ENCODE measurements at regions of chr11 and their contacts with region 1.

Region 1: DNA sequence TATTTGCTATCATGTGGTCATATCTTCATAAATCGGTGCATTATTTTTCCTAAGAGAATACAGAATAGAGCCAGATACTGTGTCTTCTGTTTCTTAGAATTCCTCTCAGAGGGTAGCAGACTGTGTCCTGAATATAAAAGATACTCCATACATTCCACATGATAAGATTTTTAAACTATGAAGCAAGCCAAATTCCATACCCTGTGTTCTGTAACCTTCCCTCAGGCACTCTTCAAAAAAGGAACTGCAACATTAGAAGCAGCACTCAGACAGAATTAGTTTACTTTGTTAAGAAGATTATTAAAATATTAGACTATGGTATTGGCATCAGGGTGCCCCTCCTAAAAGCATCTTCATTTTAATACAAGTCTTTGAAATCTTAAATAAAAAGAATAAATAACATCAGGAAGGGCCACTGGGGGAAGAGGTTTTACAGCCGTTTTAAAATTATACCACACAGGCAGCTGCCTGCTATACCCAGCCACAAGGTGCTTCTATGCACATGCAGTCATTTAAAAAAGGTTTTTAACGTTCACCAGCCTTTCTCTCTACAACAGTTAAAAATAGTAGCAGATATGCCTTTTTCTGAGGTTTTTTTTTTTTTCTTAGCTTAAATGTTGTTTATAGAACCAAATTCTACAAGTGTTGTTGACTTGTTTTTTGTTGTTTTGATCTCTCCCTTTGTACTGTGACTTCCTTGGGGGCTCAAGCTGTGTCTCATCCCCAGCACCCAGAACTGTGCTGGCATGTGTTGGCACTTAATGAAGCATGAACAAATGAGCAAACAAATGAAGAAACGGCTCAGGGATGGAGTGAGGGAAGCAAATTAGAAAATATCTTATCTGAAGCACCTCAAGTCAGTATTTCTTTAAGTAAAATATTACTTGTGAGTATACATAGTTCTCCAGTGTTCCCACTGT is 54.7 kb upstream of the CCDC89 start:
- DNase-seq: no peak
- H3K4me3 Mint-ChIP-seq: no peak overlapping the region
- H3K27ac Mint-ChIP-seq: peak overlapping the region; percentile 1
- H3K4me1 Mint-ChIP-seq: peaks cover 43% of the 10 kb centered on the region
- H3K27me3 Mint-ChIP-seq: no peaks in the 10 kb centered on the region
- CTCF ChIP-seq: no peak

Region 2: DNA sequence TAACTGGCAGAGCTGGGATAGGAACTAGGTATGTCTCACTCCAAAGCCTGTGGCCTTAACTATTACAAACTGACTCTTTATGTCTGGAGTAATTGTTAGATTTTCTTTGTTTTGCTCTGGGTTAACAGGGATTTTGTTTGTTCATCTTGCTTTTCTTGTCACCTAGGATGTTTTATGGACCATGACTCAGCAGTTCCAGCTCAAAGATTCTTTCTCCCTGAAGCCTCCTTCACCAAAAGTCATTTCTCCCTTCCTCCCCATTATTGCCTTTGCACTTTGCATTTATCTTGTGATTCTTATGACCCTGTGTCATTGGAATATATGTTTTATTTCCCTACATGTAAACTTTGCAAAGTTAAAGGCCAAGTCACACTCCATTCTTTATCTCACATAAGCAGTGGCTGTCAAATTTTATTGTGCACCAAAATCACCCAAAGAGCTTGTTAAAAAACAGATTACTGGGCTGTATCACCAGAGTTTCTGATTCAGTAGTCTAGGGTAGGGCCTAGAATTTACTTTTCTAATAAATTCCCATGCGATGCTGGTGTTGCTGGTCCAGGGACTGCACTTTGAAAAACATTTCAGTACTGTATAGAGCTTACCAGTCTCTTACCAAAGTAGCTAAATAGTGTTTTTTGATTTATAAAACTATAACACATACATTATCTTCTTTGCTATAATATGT is 441.3 kb before region 1 on chr11:
- CTCF ChIA-PET with region 1: no interaction called
- intact Hi-C with region 1: no loop called
- DNase-seq: no peak
- H3K4me3 Mint-ChIP-seq: no peak overlapping the region
- H3K27ac Mint-ChIP-seq: no peak overlapping the region
- H3K4me1 Mint-ChIP-seq: no peaks in the 10 kb centered on the region
- H3K27me3 Mint-ChIP-seq: no peaks in the 10 kb centered on the region
- CTCF ChIP-seq: no peak

Region 3: DNA sequence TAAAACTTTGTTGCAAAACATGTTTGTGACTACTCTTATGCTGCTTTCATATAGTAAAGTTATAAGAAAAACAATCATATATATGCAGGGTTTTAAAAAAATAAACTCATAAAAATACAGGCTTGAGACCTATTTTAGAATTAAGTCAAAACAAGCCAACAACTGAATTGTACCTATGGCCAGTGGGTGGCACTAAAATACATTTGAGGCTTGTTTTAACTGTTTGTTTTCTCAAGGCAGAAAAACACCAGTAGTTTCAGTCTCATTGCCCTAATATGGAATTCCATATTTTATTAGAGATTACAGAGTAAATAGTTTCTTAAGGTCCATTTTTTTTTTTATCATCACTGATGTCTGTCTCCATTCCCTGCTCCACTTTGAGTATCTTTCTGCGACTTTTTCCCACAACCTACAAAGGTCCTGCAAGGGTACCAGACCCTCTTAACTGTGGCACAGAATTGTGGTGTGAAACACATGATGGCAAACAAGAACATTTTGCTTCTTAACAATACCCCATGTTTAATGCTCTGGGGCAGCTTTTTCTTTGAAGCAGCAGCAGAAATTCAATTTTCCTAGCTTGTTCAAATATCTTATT is 46.3 kb before region 1 on chr11:
- CTCF ChIA-PET with region 1: no interaction called
- intact Hi-C with region 1: loop called (anchors 10 kb)
- DNase-seq: peak; percentile 6
- H3K4me3 Mint-ChIP-seq: no peak overlapping the region
- H3K27ac Mint-ChIP-seq: no peak overlapping the region
- H3K4me1 Mint-ChIP-seq: peaks cover 18% of the 10 kb centered on the region
- H3K27me3 Mint-ChIP-seq: no peaks in the 10 kb centered on the region
- CTCF ChIP-seq: no peak

Region 4: DNA sequence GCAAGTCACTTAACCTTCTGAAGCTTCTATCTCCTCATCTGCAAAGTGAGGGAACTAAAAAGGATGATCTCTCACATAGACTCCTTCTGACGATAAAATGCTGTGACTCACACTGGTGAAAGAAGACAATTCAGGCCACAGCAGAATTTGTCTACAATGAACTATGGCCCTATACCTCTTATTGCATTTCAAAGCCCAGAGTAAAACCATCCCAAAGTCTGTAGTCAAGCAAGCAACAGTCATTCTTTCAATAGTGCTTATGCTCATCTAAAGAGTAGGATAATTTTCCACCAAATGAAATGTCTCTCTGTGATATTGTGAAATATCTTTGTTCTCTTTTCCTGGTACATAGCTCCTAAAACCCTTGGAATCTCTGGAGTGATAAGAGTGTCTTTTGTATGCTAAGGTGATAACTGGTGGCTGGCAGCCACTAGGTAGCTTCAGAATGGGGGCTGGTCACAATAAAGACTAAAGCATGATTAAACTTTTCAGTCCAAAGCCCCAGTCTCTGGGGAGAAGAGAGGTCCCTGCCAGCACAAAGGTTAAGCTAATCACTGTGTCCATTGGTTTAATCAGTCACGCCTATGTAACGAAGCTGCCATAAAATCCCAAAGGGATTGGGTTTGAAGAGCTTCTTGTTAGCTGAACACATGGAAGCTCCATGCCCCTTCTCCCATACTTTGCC is 39.4 kb after region 1 on chr11:
- CTCF ChIA-PET with region 1: no interaction called
- intact Hi-C with region 1: loop called (anchors 5 kb)
- DNase-seq: no peak
- H3K4me3 Mint-ChIP-seq: no peak overlapping the region
- H3K27ac Mint-ChIP-seq: no peak overlapping the region
- H3K4me1 Mint-ChIP-seq: peaks cover 35% of the 10 kb centered on the region
- H3K27me3 Mint-ChIP-seq: no peaks in the 10 kb centered on the region
- CTCF ChIP-seq: no peak

Region 5: DNA sequence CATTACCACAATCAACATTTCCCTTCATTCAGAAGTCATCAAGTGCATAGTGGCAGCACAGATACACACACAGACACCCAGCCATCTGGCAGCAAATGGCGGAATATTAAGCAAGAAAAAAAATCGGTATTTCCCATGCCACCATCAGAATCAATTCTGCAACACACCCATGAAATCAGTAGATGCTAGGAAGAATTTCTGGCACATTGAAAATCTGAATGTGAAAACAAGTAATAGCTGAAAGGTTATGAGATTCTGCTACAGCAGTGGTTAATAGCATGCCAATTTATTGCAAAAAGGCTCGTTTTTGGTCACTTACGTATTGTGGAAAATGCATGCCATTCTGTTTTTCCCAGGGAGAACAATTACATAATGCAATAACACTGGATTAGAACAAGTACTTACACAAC is 237.0 kb after region 1 on chr11:
- CTCF ChIA-PET with region 1: no interaction called
- intact Hi-C with region 1: no loop called
- DNase-seq: no peak
- H3K4me3 Mint-ChIP-seq: no peak overlapping the region
- H3K27ac Mint-ChIP-seq: no peak overlapping the region
- H3K4me1 Mint-ChIP-seq: no peaks in the 10 kb centered on the region
- H3K27me3 Mint-ChIP-seq: no peaks in the 10 kb centered on the region
- CTCF ChIP-seq: no peak

Region 6: DNA sequence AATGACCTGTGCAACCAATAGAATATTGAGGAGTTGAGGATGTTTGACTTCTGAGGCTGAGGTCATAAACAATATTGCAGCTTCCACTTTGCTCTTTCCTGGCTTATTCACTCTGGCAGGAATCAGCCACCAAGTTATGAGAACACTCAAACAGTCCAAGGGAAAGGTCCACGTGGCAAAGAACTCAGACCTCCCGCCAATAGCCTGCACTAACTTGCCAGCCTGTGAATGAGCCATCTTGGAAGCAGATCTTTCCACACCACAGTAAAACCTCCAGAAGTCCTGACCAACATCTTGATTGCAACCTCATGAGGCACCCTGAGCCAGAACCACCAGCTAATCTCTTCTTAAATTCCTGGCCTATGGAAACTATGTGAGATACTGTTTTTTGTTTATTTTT is 350.8 kb after region 1 on chr11:
- CTCF ChIA-PET with region 1: no interaction called
- intact Hi-C with region 1: no loop called
- DNase-seq: no peak
- H3K4me3 Mint-ChIP-seq: no peak overlapping the region
- H3K27ac Mint-ChIP-seq: no peak overlapping the region
- H3K4me1 Mint-ChIP-seq: no peaks in the 10 kb centered on the region
- H3K27me3 Mint-ChIP-seq: no peaks in the 10 kb centered on the region
- CTCF ChIP-seq: no peak

Measured in Calu3 (cell line).